ENCODE measurements at regions of chr4 and their contacts with region 1.

Region 1: DNA sequence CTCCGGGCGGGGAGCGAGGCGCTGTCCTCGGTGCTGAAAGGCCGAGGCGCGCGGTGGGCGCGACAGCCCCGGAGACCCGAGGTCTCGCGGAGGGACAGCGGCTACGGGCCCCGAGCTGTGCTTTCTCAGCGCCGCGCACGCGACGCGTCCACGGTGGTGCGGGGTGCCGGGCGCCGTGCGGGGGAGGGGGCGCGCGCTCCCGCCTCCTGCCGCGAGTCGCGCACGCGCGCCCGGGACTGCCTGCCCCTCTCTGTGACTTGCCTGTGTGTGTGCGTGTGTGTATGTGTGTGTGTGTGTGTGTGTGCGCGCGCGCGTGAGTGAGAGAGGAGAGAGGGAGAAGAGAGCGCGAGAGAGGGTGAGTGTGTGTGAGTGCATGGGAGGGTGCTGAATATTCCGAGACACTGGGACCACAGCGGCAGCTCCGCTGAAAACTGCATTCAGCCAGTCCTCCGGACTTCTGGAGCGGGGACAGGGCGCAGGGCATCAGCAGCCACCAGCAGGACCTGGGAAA is at the start of gene GRIA2:
- DNase-seq: no peak
- ATAC-seq: no peak
- H3K4me3 ChIP-seq: no peak within 1 kb of the TSS
- H3K27ac ChIP-seq: no peak within 1 kb of the TSS
- H3K4me1 ChIP-seq: no peaks in the 10 kb centered on the region
- H3K27me3 ChIP-seq: no peaks in the 10 kb centered on the region
- CTCF ChIP-seq: no peak
- POLR2A ChIP-seq: no peak
- RAD21 ChIP-seq: no peak
- total RNA-seq, gene GRIA2: not detected

Region 2: GRCh38 chr4:157514711-157515110 is 294.3 kb after region 1 on chr4:
- CTCF ChIA-PET with region 1: no interaction called
- POLR2A ChIA-PET with region 1: no interaction called
- RAD21 ChIA-PET with region 1: no interaction called
- intact Hi-C with region 1: loop called (anchors 10 kb)
- DNase-seq: no peak
- ATAC-seq: peak; percentile 57
- H3K4me3 ChIP-seq: no peak overlapping the region
- H3K27ac ChIP-seq: no peak overlapping the region
- H3K4me1 ChIP-seq: no peaks in the 10 kb centered on the region
- H3K27me3 ChIP-seq: no peaks in the 10 kb centered on the region
- CTCF ChIP-seq: peak; percentile 32 to 58 (median 49); a peak in 5 of 6 replicates
- POLR2A ChIP-seq: no peak
- RAD21 ChIP-seq: peak; percentile 34